Spleen (tissue), 13 donors: ENCODE measurements at regions of chr3 and their contacts with region 1.

Region 1: GRCh38 chr3:33645060-33645647 is 72.9 kb downstream of the CLASP2 start:
- DNase-seq: no peak
- H3K4me3 ChIP-seq: peak overlapping the region in 3 of 8 donors; percentile 22 to 46 (median 28)
- H3K27ac ChIP-seq: peak overlapping the region in 1 of 8 donors; percentile 6
- H3K4me1 ChIP-seq: peaks cover 0 to 6% (median 2%) of the 10 kb centered on the region in 6 donors
- H3K27me3 ChIP-seq: no peaks in the 10 kb centered on the region
- CTCF ChIP-seq: no peak
- POLR2A ChIP-seq: no peak

Region 2: DNA sequence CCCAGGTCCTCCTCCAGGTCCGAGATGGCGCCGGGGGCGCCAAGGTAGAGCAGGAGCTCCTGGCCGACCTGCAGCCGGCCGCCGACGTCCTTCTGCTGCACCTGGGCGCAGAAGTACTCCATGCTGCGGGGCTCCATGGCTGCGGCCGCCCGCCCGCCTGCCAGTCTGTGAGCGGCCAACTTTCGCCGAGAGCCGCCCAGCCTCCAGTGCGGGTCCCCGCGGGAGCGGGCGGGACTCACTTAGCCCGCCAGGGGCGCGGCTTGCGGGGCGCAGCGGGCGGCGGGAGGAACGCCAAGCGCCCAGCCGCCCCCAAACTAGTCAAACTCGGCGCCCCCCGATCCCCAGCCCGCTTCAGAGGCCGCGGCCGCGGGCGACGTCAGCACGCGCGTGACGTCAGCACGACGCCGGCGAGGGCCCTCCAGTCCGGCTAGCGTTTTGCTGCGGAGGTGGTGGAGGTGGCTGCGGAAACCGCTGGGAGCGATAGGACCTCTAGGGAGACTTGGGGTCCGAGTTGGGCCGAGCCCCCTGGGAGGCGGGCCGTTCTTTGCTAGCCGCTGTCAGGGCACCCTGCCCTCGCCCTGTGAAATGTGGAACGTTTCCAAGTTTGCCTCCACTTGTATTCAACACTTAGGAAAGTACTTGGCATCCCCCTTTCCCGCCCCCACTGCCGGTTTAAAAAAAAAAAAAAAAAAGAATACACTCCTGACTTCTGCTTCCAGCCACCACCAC is 72.9 kb after region 1 on chr3 and contains the start of gene CLASP2:
- intact Hi-C with region 1: loop called (anchors 10 kb)
- DNase-seq: peak; percentile 97
- H3K4me3 ChIP-seq: peak within 1 kb of the TSS; percentile 61 to 94 (median 74)
- H3K27ac ChIP-seq: peak within 1 kb of the TSS; percentile 90 to 99 (median 98)
- H3K4me1 ChIP-seq: peaks cover 8 to 53% (median 26%) of the 10 kb centered on the region in 6 donors
- H3K27me3 ChIP-seq: no peaks in the 10 kb centered on the region
- CTCF ChIP-seq: peak in 7 of 11 experiments; percentile 4 to 40 (median 24)
- POLR2A ChIP-seq: peak; percentile 25 to 50 (median 47)
- total RNA-seq, gene CLASP2: 54.5 to 200 (median 75.6) TPM